ENCODE measurements at regions of chr7 and their contacts with region 1.

Region 1: DNA sequence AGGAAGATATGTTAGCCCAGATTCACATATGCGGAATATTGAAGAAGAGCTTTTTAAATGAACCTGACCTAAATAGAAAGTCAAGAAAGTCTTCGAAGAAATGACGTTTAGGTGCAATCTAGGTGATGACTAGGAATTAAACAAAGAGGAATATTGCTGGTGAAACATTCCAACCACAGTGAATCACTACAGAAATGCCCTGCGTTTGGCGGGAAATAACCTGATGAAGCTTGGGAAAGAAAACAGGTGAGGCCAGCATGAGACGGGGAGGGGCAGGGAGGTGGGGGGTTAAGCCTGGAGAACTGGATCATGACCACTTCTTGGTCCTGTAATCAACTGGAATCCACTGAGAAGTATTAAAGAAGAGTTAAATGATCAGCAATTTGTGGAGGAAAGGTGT is 299.4 kb upstream of the VSTM2A start:
- DNase-seq: no peak
- ATAC-seq: no peak
- H3K4me3 ChIP-seq: no peak overlapping the region
- H3K27ac ChIP-seq: no peak overlapping the region
- H3K4me1 ChIP-seq: no peaks in the 10 kb centered on the region
- H3K27me3 ChIP-seq: no peaks in the 10 kb centered on the region
- CTCF ChIP-seq: no peak

Region 2: GRCh38 chr7:53835301-53835700 is 407.5 kb before region 1 on chr7:
- intact Hi-C with region 1: no loop called
- DNase-seq: no peak
- ATAC-seq: no peak
- H3K4me3 ChIP-seq: no peak overlapping the region
- H3K27ac ChIP-seq: no peak overlapping the region
- H3K4me1 ChIP-seq: no peaks in the 10 kb centered on the region
- H3K27me3 ChIP-seq: no peaks in the 10 kb centered on the region
- CTCF ChIP-seq: no peak

Region 3: GRCh38 chr7:54326592-54327167 is 83.9 kb after region 1 on chr7:
- intact Hi-C with region 1: loop called in 3 of 10 experiments (anchors 10 kb)
- DNase-seq: no peak
- ATAC-seq: no peak
- H3K4me3 ChIP-seq: no peak overlapping the region
- H3K27ac ChIP-seq: no peak overlapping the region
- H3K4me1 ChIP-seq: no peaks in the 10 kb centered on the region
- H3K27me3 ChIP-seq: no peaks in the 10 kb centered on the region
- CTCF ChIP-seq: no peak

Region 4: GRCh38 chr7:54339073-54339472 is 96.3 kb after region 1 on chr7:
- intact Hi-C with region 1: loop called in 3 of 10 experiments (anchors 10 kb)
- DNase-seq: peak in 1 of 2 donors; percentile 35
- ATAC-seq: peak in 7 of 8 donors; percentile 55 to 87 (median 78)
- H3K4me3 ChIP-seq: no peak overlapping the region
- H3K27ac ChIP-seq: no peak overlapping the region
- H3K4me1 ChIP-seq: no peaks in the 10 kb centered on the region
- H3K27me3 ChIP-seq: no peaks in the 10 kb centered on the region
- CTCF ChIP-seq: no peak

Region 5: GRCh38 chr7:54349229-54349628 is 106.5 kb after region 1 on chr7:
- intact Hi-C with region 1: loop called in 1 of 10 experiments (anchors 10 kb)
- DNase-seq: no peak
- ATAC-seq: no peak
- H3K4me3 ChIP-seq: no peak overlapping the region
- H3K27ac ChIP-seq: no peak overlapping the region
- H3K4me1 ChIP-seq: no peaks in the 10 kb centered on the region
- H3K27me3 ChIP-seq: no peaks in the 10 kb centered on the region
- CTCF ChIP-seq: no peak